Mammary epithelial cell (primary cell): ENCODE measurements at regions of chr19 and their contacts with region 1.

Region 1: GRCh38 chr19:58154679-58155648 is 4.4 kb upstream of the ZNF329 start:
- DNase-seq: peak; percentile 92
- H3K4me3 ChIP-seq: peak overlapping the region; percentile 85 to 86 (median 85)
- H3K27ac ChIP-seq: peak overlapping the region; percentile 43
- H3K4me1 ChIP-seq: no peaks in the 10 kb centered on the region
- H3K27me3 ChIP-seq: no peaks in the 10 kb centered on the region
- CTCF ChIP-seq: peak; percentile 90 to 98

Region 2: DNA sequence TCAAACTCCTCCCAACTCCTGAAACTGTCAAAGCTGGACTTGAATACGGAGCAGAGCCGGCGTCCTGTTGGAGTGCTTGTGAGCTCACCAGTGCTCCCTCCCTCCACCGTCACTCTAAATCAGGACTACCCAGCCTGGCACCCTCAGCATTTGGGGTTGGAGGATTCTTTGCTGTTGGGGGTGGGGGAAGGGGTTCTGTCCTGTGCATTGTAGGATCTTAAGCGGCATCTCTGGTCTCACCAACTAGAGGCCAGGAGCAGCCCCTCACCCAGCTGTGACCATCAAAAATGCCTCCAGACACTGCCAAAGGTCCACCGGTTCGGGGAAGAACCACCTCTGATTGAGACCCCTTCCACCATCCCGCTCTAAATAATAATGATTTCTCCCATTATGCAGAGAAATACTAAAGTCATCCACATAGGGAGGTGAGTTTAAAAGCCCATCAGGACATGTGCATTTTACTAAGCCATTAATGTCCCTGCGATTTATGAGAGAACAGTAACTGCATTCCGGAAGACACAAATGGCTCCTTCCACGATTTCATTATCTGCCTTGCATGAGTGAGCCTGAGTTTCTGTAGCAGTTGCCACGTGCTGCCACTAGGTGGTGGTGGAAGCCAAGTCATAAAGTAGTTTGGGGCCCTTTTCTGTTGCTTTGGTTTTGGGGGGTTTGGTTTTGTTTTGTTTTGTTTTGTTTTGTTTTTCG is 1051.2 kb before region 1 on chr19:
- CTCF ChIA-PET with region 1: no interaction called
- dilution Hi-C with region 1: no loop called
- in situ Hi-C with region 1: no loop called
- intact Hi-C with region 1: loop called (anchors 1 kb)
- DNase-seq: peak; percentile 46
- H3K4me3 ChIP-seq: peak overlapping the region; percentile 11 to 25 (median 17)
- H3K27ac ChIP-seq: no peak overlapping the region
- H3K4me1 ChIP-seq: peaks cover 6% of the 10 kb centered on the region
- H3K27me3 ChIP-seq: no peaks in the 10 kb centered on the region
- CTCF ChIP-seq: peak; percentile 90 to 91

Region 3: DNA sequence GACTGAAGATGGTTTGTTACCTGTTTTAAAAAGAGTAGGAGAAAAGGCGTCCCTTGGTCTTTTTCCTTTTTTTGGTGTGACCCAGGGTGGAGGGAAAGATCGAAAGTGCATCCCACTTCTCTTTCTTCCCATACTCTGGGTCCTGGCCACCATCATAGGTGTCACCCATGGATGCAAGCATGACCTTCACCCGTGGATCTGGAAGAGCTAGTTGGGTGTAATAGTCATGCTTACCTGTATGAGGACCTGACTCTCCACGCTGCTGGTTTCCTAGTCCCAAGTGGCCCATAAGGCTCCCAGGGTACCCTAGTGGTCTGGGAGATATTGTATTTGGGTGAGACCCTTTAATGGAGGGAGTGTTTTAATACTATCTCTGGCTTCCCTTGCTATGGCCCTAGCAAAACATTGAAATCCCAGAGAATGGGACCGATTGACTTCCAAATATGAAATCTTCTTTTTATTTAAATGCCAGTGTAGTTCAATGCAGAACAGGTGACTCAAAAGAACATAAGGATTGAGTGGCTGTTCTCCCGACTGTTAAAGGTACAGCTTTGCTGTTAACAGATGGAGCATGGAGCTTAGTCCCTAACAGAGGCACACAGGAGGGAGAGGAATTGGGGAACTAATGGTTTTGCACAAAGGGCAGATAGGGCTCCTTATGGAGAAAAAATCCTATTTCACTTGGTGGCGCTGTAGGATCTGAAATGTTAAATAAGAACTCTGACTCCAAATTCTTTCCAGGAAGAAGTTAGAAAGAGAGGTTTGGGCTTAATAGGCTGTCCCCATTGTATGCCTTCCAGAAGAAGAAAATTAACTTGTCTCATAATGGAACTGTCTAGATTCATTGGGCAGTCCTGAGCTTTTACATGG is 588.3 kb before region 1 on chr19:
- CTCF ChIA-PET with region 1: no interaction called
- dilution Hi-C with region 1: no loop called
- in situ Hi-C with region 1: no loop called
- intact Hi-C with region 1: loop called (anchors 5 kb)
- DNase-seq: peak; percentile 28
- H3K4me3 ChIP-seq: no peak overlapping the region
- H3K27ac ChIP-seq: no peak overlapping the region
- H3K4me1 ChIP-seq: no peaks in the 10 kb centered on the region
- H3K27me3 ChIP-seq: no peaks in the 10 kb centered on the region
- CTCF ChIP-seq: no peak

Region 4: DNA sequence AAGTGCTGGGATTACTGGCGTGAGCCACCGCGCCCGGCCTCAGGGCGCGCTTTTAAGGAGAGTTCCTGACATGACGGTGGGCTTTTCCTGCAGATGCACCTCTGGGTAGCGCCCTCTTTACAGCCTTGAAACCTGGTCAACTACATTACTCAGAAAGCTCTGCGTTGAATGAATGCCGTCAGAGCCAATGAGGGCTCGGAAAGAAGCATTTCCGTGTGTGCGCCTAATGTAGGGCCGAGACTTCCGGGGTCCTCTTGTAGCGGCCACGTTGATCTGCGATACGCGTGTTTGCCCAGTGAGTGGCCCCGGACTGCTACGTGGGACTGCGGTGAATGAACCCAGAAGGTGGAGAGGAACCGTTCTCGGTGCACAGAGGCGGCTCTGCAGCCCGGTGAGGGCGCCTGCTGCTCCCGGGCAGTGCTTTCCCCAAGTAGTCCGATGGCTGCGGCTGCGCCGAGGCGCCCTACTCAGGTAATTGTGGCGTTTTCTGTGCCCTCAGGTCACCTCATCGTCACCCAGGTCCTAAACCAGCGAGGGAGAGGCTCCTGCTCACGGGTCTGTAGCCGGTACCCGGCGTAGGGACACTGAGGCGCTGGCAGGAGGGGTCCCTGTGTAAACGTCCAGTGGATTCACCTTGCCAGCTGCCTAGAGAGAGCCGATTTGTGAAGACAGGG is 335.4 kb before region 1 on chr19:
- CTCF ChIA-PET with region 1: no interaction called
- dilution Hi-C with region 1: no loop called
- in situ Hi-C with region 1: no loop called
- intact Hi-C with region 1: loop called (anchors 10 kb)
- DNase-seq: peak; percentile 93
- H3K4me3 ChIP-seq: peak overlapping the region; percentile 83 to 89 (median 85)
- H3K27ac ChIP-seq: peak overlapping the region; percentile 75
- H3K4me1 ChIP-seq: peaks cover 10% of the 10 kb centered on the region
- H3K27me3 ChIP-seq: no peaks in the 10 kb centered on the region
- CTCF ChIP-seq: no peak

Region 5: GRCh38 chr19:57947208-57948134 is 207.5 kb before region 1 on chr19 and contains the start of gene ZNF256:
- CTCF ChIA-PET with region 1: no interaction called
- dilution Hi-C with region 1: no loop called
- in situ Hi-C with region 1: no loop called
- intact Hi-C with region 1: loop called (anchors 1 kb)
- DNase-seq: peak; percentile 94
- H3K4me3 ChIP-seq: peak within 1 kb of the TSS; percentile 78 to 80 (median 79)
- H3K27ac ChIP-seq: peak within 1 kb of the TSS; percentile 13
- H3K4me1 ChIP-seq: peaks cover 3% of the 10 kb centered on the region
- H3K27me3 ChIP-seq: no peaks in the 10 kb centered on the region
- CTCF ChIP-seq: peak; percentile 36 to 59
- total RNA-seq, gene ZNF256: 3.7 to 5.8 TPM

Region 6: DNA sequence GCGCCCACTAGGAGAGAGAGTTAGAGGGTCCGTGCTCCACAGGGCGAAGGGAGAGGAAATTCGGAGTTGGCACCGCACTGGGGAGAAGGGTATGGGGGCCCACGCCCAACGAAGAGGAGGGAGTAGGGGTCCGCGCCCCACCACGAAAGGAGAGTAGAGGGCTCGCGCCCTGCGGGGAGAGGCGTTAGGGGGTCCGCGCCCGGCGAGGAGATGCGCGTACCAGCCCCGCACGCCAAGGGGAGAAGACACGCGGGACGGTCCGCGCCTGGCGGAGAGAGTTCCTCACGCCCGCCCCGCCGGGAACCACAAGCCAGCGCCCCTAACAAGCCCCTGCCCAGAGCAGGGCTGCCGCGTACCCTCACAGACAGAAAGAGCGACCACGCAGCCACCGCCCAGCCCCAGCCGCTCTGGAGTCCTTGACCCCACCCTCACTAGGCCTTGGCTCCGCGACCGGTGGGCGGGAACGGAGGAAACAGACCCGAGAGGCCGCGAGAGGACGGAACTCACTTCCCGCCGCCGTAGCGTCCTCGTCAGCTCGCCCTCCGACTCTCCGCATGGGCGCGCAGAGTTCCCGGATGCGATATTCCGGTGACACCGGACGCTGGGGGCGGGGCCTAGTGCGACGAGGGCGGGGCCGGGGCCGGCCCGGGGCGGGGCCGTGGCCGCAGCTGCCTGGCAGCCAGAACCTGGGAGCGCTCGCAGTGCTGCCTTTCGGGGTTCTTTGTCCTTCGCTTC is 37.0 kb before region 1 on chr19:
- CTCF ChIA-PET with region 1: no interaction called
- dilution Hi-C with region 1: no loop called
- in situ Hi-C with region 1: no loop called
- intact Hi-C with region 1: no loop called
- DNase-seq: no peak
- H3K4me3 ChIP-seq: no peak overlapping the region
- H3K27ac ChIP-seq: no peak overlapping the region
- H3K4me1 ChIP-seq: no peaks in the 10 kb centered on the region
- H3K27me3 ChIP-seq: no peaks in the 10 kb centered on the region
- CTCF ChIP-seq: no peak

Region 7: GRCh38 chr19:58237324-58237723 is 82.4 kb after region 1 on chr19:
- CTCF ChIA-PET with region 1: no interaction called
- dilution Hi-C with region 1: no loop called
- in situ Hi-C with region 1: no loop called
- intact Hi-C with region 1: no loop called
- DNase-seq: no peak
- H3K4me3 ChIP-seq: no peak overlapping the region
- H3K27ac ChIP-seq: no peak overlapping the region
- H3K4me1 ChIP-seq: no peaks in the 10 kb centered on the region
- H3K27me3 ChIP-seq: no peaks in the 10 kb centered on the region
- CTCF ChIP-seq: no peak